ENCODE measurements at regions of chr15 and their contacts with region 1.

Region 1: DNA sequence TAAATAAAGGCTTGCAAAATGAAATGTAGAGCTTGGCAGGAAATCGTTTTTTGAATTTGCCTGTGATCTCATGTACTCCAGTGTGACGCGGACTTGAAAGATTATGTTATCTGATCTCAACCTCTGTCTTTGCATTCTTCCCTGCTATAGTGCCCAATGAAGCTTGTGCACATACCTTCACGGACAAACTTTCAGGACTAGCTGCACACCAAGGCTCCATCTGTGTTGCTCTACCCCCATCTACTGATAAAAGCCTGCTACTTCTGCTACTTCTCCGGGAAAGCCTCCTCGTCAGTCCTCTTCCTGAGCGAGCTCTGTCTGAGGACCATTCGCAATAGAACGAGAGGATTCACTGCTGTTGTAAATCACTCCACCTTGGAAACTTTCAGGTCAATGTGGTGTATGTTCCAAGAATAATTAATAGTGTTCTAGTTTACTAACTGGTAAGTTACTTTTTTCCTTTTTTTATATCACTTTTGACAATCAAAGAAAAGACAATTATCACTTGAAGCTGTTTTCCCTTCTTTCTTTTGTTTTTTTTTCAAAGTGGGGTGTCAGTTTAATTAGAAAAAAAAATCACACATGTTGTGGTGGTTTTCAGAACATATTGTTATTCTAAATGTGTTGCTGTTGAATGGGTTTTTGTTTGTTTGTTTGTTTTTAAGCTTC is 217.6 kb downstream of the ARRDC4 start:
- DNase-seq: peak; percentile 56
- ATAC-seq: peak; percentile 97
- H3K4me3 ChIP-seq: no peak overlapping the region
- H3K27ac ChIP-seq: no peak overlapping the region
- H3K4me1 ChIP-seq: no peaks in the 10 kb centered on the region
- H3K27me3 ChIP-seq: peaks cover 0 to 14% of the 10 kb centered on the region in 2 experiments; a peak in 1 of 5 replicates
- CTCF ChIP-seq: peak; percentile 85
- EP300 ChIP-seq: no peak
- POLR2A ChIP-seq: no peak
- RAD21 ChIP-seq: peak; percentile 57

Region 2: GRCh38 chr15:97903971-97904572 is 274.0 kb before region 1 on chr15:
- CTCF ChIA-PET with region 1: interaction called, 17 read pairs
- POLR2A ChIA-PET with region 1: no interaction called
- in situ Hi-C with region 1: loop called (anchors 5 kb)
- intact Hi-C with region 1: loop called (anchors 1 kb)
- DNase-seq: peak; percentile 34
- ATAC-seq: peak; percentile 100
- H3K4me3 ChIP-seq: no peak overlapping the region
- H3K27ac ChIP-seq: no peak overlapping the region
- H3K4me1 ChIP-seq: no peaks in the 10 kb centered on the region; the same call in 1 of the 2 replicates
- H3K27me3 ChIP-seq: peaks cover 0 to 14% of the 10 kb centered on the region in 2 experiments; a peak in 2 of 5 replicates
- CTCF ChIP-seq: peak; percentile 87
- EP300 ChIP-seq: no peak
- POLR2A ChIP-seq: no peak
- RAD21 ChIP-seq: peak; percentile 88

Region 3: DNA sequence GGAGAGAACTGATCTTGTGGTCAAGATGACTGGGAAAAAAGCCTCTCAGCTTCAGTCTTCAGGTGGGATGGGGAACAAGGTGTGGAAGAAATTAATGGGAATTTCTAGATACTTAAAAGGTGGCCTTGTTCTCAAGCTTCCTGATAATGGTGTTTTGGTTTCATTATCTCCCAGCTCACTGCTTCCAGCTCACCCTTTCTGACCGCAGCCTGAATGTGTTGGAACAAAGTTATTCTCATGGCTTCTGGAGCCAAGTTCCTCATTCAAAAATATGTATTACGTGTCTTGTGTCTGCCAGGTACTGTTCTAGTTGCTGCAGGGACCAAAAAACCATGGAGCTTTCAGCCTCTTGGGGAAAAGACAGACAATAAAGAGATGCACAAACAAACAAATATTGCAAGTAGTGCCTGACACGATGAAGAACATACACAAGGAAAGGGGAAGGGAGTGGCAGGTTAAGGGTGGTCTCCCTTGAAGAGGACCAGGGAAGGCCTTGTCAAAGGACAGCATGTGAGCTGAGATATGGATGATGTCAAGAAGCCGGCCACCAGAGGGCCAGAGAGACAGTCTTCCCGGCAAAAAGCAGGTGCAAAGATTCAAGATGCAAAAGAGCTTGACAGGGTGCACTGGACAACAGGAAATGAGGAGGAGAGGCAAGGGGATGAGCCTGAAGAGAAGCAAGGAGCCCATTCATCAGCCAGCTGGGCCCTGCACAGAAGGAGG is 182.0 kb before region 1 on chr15:
- CTCF ChIA-PET with region 1: no interaction called
- POLR2A ChIA-PET with region 1: no interaction called
- in situ Hi-C with region 1: no loop called
- intact Hi-C with region 1: loop called (anchors 5 kb)
- DNase-seq: no peak
- ATAC-seq: peak; percentile 87
- H3K4me3 ChIP-seq: peak overlapping the region in 1 of 3 experiments; percentile 21; a peak in 2 of 6 replicates
- H3K27ac ChIP-seq: no peak overlapping the region
- H3K4me1 ChIP-seq: 0 out of 2 replicates have a peak, but pooled peaks cover 7% of the 10 kb centered on the region
- H3K27me3 ChIP-seq: no peaks in the 10 kb centered on the region
- CTCF ChIP-seq: peak; percentile 68
- EP300 ChIP-seq: no peak
- POLR2A ChIP-seq: no peak
- RAD21 ChIP-seq: peak; percentile 28; the same call in 1 of the 2 replicates

Region 4: DNA sequence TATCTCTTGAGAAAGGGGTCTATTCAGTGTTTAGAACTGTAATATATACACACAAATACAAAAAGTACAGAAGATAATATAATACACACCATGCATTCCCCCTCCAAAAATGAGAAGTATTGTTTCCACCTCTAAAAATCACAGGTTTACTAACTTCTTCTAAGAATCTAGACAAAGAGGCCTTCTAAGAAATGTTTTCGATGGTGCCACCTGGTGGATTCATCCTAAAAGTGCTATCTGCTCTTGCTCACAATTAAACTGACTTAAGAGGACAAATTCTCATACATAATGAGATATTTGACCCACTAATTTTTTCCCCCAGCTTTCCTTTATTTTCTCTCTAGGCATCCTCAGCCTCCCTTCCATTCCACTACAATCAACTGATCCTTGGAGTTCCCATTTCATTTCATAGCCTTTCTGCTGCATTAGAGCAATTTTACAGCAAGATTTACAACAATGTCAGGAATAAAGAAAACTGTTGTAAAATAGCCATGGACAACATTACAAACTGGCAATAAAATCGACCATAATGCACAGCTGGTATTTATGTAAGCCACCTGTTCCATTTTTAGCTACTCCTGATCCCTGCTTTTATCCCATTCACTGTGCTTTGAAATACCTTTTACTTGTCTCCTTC is 92.9 kb before region 1 on chr15:
- CTCF ChIA-PET with region 1: no interaction called
- POLR2A ChIA-PET with region 1: no interaction called
- in situ Hi-C with region 1: no loop called
- intact Hi-C with region 1: loop called (anchors 1 kb)
- DNase-seq: peak; percentile 43
- ATAC-seq: no peak
- H3K4me3 ChIP-seq: no peak overlapping the region
- H3K27ac ChIP-seq: no peak overlapping the region
- H3K4me1 ChIP-seq: no peaks in the 10 kb centered on the region
- H3K27me3 ChIP-seq: no peaks in the 10 kb centered on the region
- CTCF ChIP-seq: peak; percentile 62
- EP300 ChIP-seq: no peak
- POLR2A ChIP-seq: no peak
- RAD21 ChIP-seq: no peak

Region 5: DNA sequence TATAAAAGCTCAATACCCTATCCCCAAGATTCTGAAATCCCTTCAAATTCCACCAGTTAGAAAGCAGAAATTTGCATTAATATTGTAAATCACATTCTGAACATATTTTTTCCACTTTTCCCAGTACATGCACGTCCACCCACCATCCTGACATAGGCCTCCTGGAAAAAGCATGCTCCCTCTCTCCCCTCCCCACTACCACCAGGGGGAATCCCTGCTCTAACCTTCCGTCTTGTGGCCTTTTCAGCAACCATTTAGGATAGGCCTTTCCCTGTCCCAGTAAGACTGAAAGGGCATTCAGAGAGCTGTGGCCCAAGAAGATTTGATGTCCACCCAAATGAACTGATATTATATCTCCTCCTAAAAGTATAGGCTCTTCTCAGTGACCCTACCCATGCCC is 35.5 kb before region 1 on chr15:
- CTCF ChIA-PET with region 1: no interaction called
- POLR2A ChIA-PET with region 1: no interaction called
- in situ Hi-C with region 1: no loop called
- intact Hi-C with region 1: no loop called
- DNase-seq: no peak
- ATAC-seq: peak; percentile 56
- H3K4me3 ChIP-seq: no peak overlapping the region
- H3K27ac ChIP-seq: no peak overlapping the region
- H3K4me1 ChIP-seq: no peaks in the 10 kb centered on the region
- H3K27me3 ChIP-seq: no peaks in the 10 kb centered on the region
- CTCF ChIP-seq: no peak
- EP300 ChIP-seq: no peak
- POLR2A ChIP-seq: no peak
- RAD21 ChIP-seq: no peak

Region 6: DNA sequence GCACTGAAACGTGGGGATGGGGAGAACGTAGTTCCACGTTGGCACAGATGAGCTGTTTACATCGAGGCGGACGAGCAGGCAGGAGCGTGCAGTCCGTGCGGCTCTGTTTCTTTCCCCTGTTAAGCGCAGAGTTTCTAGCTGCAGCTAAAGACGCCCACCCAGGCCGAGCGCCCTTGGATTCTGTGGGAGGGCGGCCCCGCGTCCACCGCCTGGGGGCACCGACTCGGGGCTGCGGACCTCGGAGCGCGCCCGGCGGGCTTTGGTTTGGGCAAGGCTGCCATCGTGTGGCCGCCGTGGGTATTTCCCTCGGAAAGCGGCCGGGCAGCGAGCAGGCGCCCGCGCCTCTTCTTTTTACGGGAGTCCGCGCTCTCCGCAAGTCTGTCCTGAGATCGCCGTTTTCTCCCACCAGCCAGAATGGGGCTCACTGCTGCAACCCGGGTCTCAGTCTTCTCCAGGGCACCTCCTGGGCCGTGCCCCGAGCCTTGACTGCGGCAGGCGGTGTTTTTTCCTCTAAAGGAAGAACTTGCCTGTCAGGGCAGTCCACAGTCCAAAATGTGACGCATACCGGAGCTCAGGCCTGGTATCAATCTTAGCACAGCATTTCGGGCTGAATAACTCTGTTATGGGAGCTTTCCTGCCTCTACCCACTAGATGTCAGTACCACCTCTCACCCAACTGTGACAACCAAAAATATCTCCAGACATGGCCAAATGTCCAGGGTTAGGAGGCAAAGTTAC is 250.4 kb after region 1 on chr15:
- CTCF ChIA-PET with region 1: no interaction called
- POLR2A ChIA-PET with region 1: no interaction called
- in situ Hi-C with region 1: no loop called
- intact Hi-C with region 1: loop called (anchors 10 kb)
- DNase-seq: peak; percentile 57
- ATAC-seq: peak; percentile 92
- H3K4me3 ChIP-seq: peak overlapping the region; percentile 39 to 65 (median 44); a peak in 5 of 6 replicates
- H3K27ac ChIP-seq: no peak overlapping the region
- H3K4me1 ChIP-seq: 0 out of 2 replicates have a peak, but pooled peaks cover 5% of the 10 kb centered on the region
- H3K27me3 ChIP-seq: peaks cover 0 to 37% of the 10 kb centered on the region in 2 experiments; a peak in 2 of 5 replicates
- CTCF ChIP-seq: peak; percentile 85
- EP300 ChIP-seq: no peak
- POLR2A ChIP-seq: no peak
- RAD21 ChIP-seq: peak; percentile 79